PC-3 (cell line): ENCODE measurements at regions of chr3 and their contacts with region 1.

Region 1: GRCh38 chr3:32842531-32842931 is 24.7 kb downstream of the TRIM71 start:
- DNase-seq: peak; percentile 11
- ATAC-seq: peak; percentile 31
- H3K4me3 ChIP-seq: no peak overlapping the region
- H3K27ac ChIP-seq: peak overlapping the region; percentile 91
- H3K4me1 ChIP-seq: peaks cover 27% of the 10 kb centered on the region
- H3K27me3 ChIP-seq: no peaks in the 10 kb centered on the region
- CTCF ChIP-seq: no peak

Region 2: GRCh38 chr3:31541089-31541488 is 1301.4 kb before region 1 on chr3:
- CTCF ChIA-PET with region 1: no interaction called
- POLR2A ChIA-PET with region 1: no interaction called
- intact Hi-C with region 1: no loop called
- DNase-seq: peak; percentile 41
- ATAC-seq: peak; percentile 57
- H3K4me3 ChIP-seq: no peak overlapping the region
- H3K27ac ChIP-seq: peak overlapping the region; percentile 4; the same call in 1 of the 2 replicates
- H3K4me1 ChIP-seq: peaks cover 36% of the 10 kb centered on the region
- H3K27me3 ChIP-seq: no peaks in the 10 kb centered on the region
- CTCF ChIP-seq: no peak

Region 3: DNA sequence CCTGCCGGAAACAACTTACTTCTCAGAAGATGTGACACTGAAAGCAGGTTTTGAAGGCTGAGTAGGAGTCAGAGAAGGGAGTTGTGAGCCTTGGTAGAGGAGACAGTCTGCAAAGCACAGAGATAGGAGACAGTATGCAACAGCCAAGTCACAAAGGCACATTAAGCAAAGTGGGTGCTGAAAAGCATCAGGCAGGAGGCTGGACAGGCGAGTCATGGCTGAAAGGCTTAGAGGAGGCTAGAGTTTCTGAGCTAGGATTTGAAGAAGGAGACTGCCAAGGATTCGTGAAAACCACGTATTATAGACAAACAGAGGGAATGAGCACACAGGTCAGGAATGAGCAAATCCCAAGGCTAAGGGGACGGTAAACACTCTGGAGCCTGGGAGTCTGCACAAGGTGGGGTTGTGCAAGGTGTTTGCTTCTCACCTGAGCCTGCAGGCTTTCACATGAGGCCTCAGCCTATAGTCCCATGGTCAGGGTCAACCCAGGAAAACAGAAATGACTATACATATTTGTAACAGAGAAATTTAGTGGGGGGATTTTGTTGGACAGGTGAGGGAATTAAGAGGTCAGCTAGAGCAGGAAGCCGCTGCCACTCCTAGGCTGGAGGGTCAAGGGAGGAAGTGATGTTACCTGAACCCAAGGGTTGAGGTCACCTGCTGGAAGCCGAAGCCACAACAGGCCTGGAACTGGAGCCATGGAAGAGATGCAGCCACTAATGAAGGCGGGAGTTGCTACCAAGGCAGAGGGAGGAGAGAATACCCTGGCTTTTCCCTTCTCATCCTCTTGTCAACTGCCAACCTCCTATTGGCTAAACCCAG is 47.8 kb before region 1 on chr3:
- CTCF ChIA-PET with region 1: interaction called, 4 read pairs
- POLR2A ChIA-PET with region 1: interaction called, 12 read pairs
- intact Hi-C with region 1: loop called (anchors 2 kb)
- DNase-seq: peak; percentile 84
- ATAC-seq: peak; percentile 89
- H3K4me3 ChIP-seq: no peak overlapping the region
- H3K27ac ChIP-seq: peak overlapping the region; percentile 59
- H3K4me1 ChIP-seq: peaks cover 24% of the 10 kb centered on the region
- H3K27me3 ChIP-seq: no peaks in the 10 kb centered on the region
- CTCF ChIP-seq: no peak

Region 4: GRCh38 chr3:32872487-32873382 is 30.2 kb after region 1 on chr3:
- CTCF ChIA-PET with region 1: interaction called, 3 read pairs
- POLR2A ChIA-PET with region 1: interaction called, 4 read pairs
- intact Hi-C with region 1: loop called (anchors 1 kb)
- DNase-seq: peak; percentile 60
- ATAC-seq: peak; percentile 52
- H3K4me3 ChIP-seq: no peak overlapping the region
- H3K27ac ChIP-seq: no peak overlapping the region
- H3K4me1 ChIP-seq: peaks cover 33% of the 10 kb centered on the region
- H3K27me3 ChIP-seq: no peaks in the 10 kb centered on the region
- CTCF ChIP-seq: no peak

Region 5: DNA sequence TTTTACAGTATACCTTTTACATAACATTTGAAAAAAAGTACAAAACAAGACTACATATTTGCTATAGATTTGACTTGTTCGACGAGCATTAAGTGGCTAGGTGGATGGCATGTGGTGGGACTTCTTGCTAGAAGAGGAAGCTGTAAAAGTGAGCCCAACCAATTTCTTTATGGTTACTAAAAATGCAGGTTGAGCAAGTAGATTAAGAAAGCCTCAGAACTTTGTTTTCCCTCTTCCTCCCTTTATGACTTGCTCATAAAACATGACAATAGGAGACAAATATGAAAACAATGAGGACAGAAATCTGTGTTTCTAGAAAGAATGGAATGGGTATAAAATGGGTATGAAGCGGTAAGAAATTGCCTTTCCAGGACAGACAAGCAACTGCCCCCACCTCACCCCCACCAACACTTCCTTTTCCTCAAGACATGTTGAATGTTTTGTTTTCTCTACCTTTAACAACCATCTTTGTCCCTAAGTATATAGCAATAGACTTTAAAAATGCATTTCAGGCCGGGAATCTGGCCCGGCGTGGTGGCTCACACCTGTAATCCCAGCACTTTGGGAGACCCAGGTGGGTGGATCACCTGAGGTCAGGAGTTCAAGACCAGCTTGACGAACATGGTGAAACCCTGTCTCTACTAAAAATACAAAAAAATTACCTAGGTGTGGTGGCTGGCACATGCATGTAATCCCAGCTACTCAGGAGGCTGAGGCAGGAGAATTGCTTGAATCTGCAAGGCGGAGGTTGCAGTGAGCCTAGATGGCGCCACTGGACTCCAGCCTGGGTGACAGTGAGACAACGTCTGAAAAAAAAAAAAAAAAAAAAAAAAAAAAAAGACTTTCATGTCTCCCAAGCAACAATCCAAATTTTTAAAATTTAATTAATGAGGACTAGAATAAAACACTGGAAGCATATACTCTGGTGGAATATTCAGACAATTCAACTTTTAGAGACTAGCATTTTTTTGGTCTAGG is 59.2 kb after region 1 on chr3:
- CTCF ChIA-PET with region 1: interaction called, 8 read pairs
- POLR2A ChIA-PET with region 1: no interaction called
- intact Hi-C with region 1: loop called (anchors 1 kb)
- DNase-seq: peak; percentile 58
- ATAC-seq: peak; percentile 52
- H3K4me3 ChIP-seq: peak overlapping the region; percentile 57
- H3K27ac ChIP-seq: no peak overlapping the region
- H3K4me1 ChIP-seq: peaks cover 9% of the 10 kb centered on the region; the same call in 1 of the 2 replicates
- H3K27me3 ChIP-seq: no peaks in the 10 kb centered on the region
- CTCF ChIP-seq: peak; percentile 64

Region 6: GRCh38 chr3:33006081-33006480 is 163.6 kb after region 1 on chr3:
- CTCF ChIA-PET with region 1: no interaction called
- POLR2A ChIA-PET with region 1: no interaction called
- intact Hi-C with region 1: no loop called
- DNase-seq: no peak
- ATAC-seq: no peak
- H3K4me3 ChIP-seq: no peak overlapping the region
- H3K27ac ChIP-seq: no peak overlapping the region
- H3K4me1 ChIP-seq: no peaks in the 10 kb centered on the region
- H3K27me3 ChIP-seq: no peaks in the 10 kb centered on the region
- CTCF ChIP-seq: no peak